ENCODE measurements at regions of chr20 and their contacts with region 1.

Region 1: DNA sequence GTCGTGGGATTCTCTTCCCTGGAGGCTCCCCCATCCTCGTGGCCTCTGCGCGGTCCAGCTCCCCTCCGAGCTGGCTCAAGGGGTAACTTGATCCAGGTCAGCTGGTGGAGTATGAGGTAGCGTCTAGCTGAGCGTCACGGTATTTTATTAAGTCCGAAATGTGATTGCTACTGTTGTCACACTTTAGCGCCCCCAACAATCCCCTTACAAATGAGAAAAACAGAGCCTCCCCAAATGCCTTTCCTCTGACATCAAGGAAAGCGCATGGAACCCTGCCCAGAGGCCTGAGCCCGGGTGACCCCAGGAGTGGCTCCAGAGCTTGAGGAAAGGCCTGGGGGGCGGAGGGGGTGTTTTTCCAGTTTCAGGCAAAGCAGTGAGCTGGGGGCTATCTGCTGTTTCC is 192.4 kb downstream of the ZMYND8 start:
- DNase-seq: no peak
- H3K4me3 ChIP-seq: no peak overlapping the region
- H3K27ac ChIP-seq: no peak overlapping the region
- H3K4me1 ChIP-seq: no peaks in the 10 kb centered on the region
- H3K27me3 ChIP-seq: no peaks in the 10 kb centered on the region
- CTCF ChIP-seq: no peak
- POLR2A ChIP-seq: no peak

Region 2: GRCh38 chr20:46757754-46758678 is 406.1 kb before region 1 on chr20:
- intact Hi-C with region 1: loop called (anchors 10 kb)
- DNase-seq: peak; percentile 75
- H3K4me3 ChIP-seq: no peak overlapping the region
- H3K27ac ChIP-seq: no peak overlapping the region
- H3K4me1 ChIP-seq: no peaks in the 10 kb centered on the region
- H3K27me3 ChIP-seq: no peaks in the 10 kb centered on the region
- CTCF ChIP-seq: peak; percentile 87 to 98 (median 90)
- POLR2A ChIP-seq: no peak

Region 3: DNA sequence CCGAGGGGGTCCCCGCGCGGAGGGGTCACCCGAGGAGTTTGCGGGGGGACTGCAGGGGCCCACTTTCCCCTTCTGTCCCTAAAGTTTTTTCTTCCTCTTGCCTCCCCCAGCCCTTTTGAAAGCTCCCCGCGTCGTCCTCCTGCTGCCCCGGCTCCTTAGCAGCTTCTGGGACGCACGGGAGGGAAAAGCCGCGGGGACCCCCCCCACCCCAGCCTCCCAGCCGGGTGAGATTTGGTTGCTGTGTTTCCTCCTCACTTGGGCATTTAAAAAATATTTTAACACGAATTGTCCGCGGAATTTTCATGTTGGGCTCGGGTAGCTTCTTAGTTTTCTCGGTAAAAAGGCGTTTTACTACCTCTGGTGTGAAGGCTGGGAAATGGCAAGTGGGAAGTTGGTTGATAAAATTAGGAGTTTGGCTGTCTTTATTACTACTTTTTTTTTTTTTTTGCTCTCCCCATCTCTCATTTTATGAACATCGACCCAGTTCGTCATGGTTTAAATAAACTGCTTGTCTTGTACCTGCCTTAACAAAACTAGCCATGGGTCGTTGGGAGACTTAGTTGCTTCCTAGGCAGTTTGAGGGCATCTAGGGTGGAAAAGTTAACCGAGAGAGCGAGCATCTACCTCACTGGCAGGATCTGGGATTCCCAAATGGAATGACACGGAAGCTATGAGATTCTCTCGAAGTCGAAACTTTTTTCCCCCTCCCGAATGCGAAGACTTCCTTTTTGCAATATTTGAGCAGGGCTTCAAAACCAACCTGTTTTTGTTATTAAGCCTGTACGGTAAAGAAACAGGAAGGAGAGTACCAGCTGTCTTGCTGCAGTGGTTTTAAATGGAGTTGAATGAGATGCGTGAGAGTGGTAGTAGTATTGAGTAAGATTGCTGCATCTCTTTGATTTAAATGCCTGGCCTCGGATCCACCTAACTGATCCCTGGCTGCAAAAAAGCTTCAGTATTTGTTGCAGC is 338.4 kb after region 1 on chr20:
- intact Hi-C with region 1: no loop called
- DNase-seq: peak; percentile 38
- H3K4me3 ChIP-seq: peak overlapping the region; percentile 95 to 98
- H3K27ac ChIP-seq: peak overlapping the region; percentile 95
- H3K4me1 ChIP-seq: peaks cover 16% of the 10 kb centered on the region
- H3K27me3 ChIP-seq: no peaks in the 10 kb centered on the region
- CTCF ChIP-seq: no peak
- POLR2A ChIP-seq: no peak

Measured in testis (tissue), 5 donors.